ENCODE measurements at regions of chr2 and their contacts with region 1.

Region 1: DNA sequence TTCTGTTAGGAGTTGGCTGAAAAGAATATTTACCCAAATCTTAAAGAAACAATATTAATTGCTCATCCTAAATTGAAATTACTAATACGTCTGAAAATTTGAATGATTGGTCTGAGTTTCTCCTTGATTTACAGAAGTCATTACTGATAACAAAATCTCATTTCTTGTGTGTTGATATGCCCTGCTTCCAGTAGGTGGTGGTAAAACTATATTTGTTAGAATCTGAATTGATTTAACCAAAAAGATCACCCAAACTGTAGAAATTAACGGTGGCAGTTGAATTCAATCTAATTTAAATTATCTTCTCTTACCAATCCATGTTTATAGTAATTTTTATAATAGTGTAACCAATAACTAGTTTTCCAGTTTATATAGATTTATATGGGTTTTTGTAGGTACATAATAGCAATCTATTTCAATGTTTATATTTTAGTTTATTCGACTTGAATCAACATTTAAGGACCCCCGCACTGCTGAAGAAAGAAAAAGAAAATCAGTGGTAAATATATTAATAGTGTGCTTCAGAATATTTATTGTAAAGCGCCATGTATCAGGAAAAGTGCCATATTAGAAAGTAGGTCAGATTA is 38.3 kb downstream of the PAPOLG start:
- DNase-seq: peak; percentile 45
- ATAC-seq: 0 out of 2 replicates have a peak, but pooled peaks have one; percentile 37
- H3K4me3 ChIP-seq: no peak overlapping the region
- H3K27ac ChIP-seq: no peak overlapping the region
- H3K4me1 ChIP-seq: no peaks in the 10 kb centered on the region
- H3K27me3 ChIP-seq: no peaks in the 10 kb centered on the region
- CTCF ChIP-seq: peak; percentile 79

Region 2: DNA sequence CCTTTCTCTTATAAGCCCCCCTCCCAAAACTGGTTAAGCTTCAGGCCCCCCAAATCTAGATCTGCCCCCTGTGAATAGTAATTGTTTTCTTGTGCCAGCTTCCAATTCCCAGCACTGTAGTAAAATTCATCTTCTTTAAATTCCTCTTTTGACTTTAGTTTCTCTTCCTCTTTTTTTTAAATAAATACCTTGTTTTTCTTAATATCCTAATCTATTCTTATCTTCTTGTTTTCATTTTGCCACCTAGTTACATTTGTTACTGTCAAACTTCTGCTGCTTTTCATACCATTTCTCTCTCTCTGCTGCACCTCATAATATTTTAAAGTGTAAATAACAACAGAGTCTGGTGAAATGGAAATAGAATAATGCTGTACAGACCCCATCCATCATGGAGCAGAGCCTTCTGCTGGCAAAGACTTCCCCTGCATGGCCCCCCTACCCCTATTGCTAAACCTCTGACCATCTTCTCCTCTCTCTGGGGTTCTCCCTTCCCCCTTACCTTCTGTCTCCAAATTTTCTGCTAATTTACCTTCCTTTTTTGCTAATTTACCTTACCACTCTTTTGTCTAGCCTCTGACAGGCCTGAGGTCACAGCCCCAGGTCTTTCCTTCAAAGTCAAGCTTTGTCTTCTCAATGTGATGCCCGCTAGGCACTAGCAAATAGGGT is 133.2 kb before region 1 on chr2:
- CTCF ChIA-PET with region 1: no interaction called
- POLR2A ChIA-PET with region 1: no interaction called
- intact Hi-C with region 1: no loop called
- DNase-seq: no peak
- ATAC-seq: no peak
- H3K4me3 ChIP-seq: no peak overlapping the region
- H3K27ac ChIP-seq: no peak overlapping the region
- H3K4me1 ChIP-seq: no peaks in the 10 kb centered on the region
- H3K27me3 ChIP-seq: peaks cover 56% of the 10 kb centered on the region
- CTCF ChIP-seq: no peak

Region 3: GRCh38 chr2:60780721-60781120 is 13.6 kb before region 1 on chr2:
- CTCF ChIA-PET with region 1: no interaction called
- POLR2A ChIA-PET with region 1: no interaction called
- intact Hi-C with region 1: loop called (anchors 1 kb)
- DNase-seq: no peak
- ATAC-seq: no peak
- H3K4me3 ChIP-seq: no peak overlapping the region
- H3K27ac ChIP-seq: no peak overlapping the region
- H3K4me1 ChIP-seq: no peaks in the 10 kb centered on the region
- H3K27me3 ChIP-seq: no peaks in the 10 kb centered on the region
- CTCF ChIP-seq: no peak

Region 4: DNA sequence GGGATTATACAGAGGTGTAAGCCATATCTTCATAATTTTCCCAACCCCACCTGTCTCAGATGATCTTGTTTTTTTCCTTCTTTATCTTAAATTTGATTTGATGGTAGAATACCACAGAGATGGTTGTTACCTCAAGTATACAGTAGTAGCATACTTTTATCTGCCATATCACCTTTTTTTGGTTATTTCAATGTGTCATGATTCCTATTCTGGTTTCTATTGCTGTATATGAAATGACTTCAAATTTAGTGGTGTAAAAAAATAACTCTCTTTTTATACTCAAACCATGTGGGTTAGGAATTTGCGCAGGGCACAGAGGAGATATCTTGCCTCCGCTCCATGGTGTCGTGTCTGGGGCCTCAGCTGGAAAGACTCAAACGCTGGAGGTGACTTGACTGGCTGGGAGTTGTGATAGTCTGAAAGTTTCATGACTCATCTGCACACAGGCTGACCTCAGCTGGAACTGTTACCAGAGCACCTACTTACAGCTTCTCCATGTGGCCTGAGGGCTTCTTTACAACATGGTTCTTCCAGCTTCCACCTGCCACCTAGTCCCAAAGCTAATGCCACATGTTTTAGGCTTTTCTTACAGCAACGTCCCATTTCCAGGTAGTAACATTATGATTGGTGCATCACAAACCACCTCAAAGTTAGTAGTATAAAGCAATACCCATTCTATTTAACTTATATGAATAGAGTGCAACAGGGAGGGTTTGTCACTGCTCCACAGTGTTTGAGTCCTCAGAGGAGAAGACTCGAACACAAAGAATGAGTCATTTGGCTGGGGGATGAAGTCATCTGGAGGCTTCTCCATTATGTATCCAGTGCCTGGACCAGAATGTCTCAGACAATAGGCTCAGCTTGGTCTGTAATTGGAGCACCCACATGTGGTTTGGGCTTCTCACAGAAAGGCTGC is 826.1 kb after region 1 on chr2:
- CTCF ChIA-PET with region 1: no interaction called
- POLR2A ChIA-PET with region 1: no interaction called
- intact Hi-C with region 1: no loop called
- DNase-seq: peak; percentile 89
- ATAC-seq: peak; percentile 94
- H3K4me3 ChIP-seq: no peak overlapping the region
- H3K27ac ChIP-seq: peak overlapping the region; percentile 57
- H3K4me1 ChIP-seq: peaks cover 10% of the 10 kb centered on the region
- H3K27me3 ChIP-seq: no peaks in the 10 kb centered on the region
- CTCF ChIP-seq: no peak

Measured in PC-3 (cell line).